Motor neuron (in vitro differentiated cells): ENCODE measurements at regions of chr7 and their contacts with region 1.

Region 1: DNA sequence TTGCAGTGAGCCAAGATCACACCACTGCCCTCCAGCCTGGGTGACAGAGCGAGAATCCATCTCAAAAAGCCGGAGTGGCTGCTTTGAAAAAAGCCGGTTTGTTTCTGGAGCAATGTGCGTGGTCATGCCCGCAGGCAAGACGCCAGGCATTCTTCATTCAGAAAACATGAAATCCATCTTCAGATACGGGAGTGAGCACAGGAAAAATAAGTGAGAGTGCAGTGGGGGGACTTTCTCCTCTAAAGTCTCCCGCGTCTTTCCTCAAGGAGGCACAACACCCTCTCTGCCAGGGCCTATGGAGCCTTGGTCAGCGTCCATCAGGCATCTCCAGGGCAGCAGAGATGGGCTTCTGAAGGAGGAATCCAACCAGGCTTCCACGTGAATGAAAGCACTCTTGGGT is 62.3 kb upstream of the DGKI start:
- ATAC-seq: no peak
- H3K4me3 ChIP-seq: no peak overlapping the region
- H3K27ac ChIP-seq: no peak overlapping the region
- H3K4me1 ChIP-seq: peaks cover 0 to 10% of the 10 kb centered on the region in 2 donors

Region 2: DNA sequence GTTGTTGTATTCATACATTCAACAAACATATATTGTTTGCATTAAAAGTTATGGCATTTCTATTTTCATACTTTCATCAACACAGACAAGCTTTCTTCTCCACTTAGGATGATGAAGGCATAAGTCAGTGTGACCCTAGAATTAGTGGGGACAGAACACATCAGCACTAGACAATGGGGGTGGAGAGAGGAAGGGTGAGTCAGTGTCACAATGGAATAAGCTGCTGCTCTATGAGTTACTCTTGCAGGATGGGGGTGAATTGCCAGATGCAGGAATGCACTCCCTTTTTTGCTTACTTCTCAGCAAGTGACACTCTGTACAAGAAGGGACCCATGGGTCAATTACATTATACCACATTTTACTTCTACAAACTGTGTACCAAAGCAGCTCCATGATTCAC is 136.3 kb before region 1 on chr7:
- in situ Hi-C with region 1: no loop called
- ATAC-seq: peak in 7 of 8 experiments; percentile 74 to 93 (median 81)
- H3K4me3 ChIP-seq: no peak overlapping the region
- H3K27ac ChIP-seq: no peak overlapping the region
- H3K4me1 ChIP-seq: peaks cover 0 to 3% of the 10 kb centered on the region in 2 donors

Region 3: DNA sequence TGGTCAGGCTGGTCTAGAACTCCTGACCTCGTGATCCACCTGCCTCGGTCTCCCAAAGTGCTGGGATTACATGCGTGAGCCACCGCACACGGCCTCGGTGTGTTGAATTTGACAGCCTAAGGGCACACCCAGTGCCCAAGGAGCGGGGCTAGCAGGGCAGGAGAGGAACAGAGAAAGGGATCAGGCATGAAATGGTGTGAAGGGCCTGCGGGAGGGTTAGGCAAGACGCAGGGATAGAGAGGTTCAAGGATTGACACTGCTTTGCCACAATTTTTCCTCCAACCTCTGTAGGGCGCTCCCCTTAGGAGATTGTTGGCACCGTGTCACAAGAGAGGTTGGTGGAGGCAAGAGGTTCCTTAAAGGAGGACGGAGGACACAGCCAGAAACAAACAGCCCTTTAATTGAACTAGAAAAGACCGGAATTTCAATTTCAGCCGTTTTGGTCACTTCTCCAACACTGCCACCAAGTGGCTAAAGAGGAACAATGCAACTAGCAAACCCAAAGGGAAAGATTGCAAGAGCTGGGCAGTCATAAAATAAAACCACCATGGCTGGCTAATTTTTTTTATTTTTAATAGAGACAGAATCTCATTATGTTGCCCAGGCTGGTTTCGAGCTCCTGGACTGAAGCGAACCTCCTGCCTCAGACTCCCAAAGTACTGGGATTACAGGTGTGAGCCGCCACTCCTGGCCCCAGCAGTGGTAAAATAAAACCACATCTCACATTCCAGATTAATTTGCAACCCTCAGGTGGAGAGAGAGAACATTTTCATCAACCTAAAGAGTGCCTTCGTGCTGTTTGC is 99.7 kb after region 1 on chr7:
- in situ Hi-C with region 1: loop called in 6 of 9 experiments (anchors 5 to 25 kb)
- ATAC-seq: peak; percentile 54 to 64 (median 57)
- H3K4me3 ChIP-seq: no peak overlapping the region
- H3K27ac ChIP-seq: no peak overlapping the region
- H3K4me1 ChIP-seq: peaks cover 0 to 3% of the 10 kb centered on the region in 2 donors